ENCODE measurements at regions of chr6 and their contacts with region 1.

Region 1: GRCh38 chr6:123316733-123317323 is 319.9 kb downstream of the TRDN start:
- DNase-seq: peak; percentile 10
- H3K27ac ChIP-seq: no peak overlapping the region
- CTCF ChIP-seq: peak; percentile 59

Region 2: GRCh38 chr6:122956376-122956775 is 360.5 kb before region 1 on chr6:
- CTCF ChIA-PET with region 1: interaction called, 12 read pairs
- POLR2A ChIA-PET with region 1: no interaction called
- DNase-seq: no peak
- H3K27ac ChIP-seq: no peak overlapping the region
- CTCF ChIP-seq: no peak

Region 3: GRCh38 chr6:123062670-123063069 is 254.2 kb before region 1 on chr6:
- CTCF ChIA-PET with region 1: no interaction called
- POLR2A ChIA-PET with region 1: no interaction called
- DNase-seq: no peak
- H3K27ac ChIP-seq: no peak overlapping the region
- CTCF ChIP-seq: no peak

Region 4: GRCh38 chr6:123306334-123306733 is 10.5 kb before region 1 on chr6:
- CTCF ChIA-PET with region 1: no interaction called
- POLR2A ChIA-PET with region 1: no interaction called
- DNase-seq: no peak
- H3K27ac ChIP-seq: no peak overlapping the region
- CTCF ChIP-seq: no peak

Measured in RWPE1 (cell line).